Psoas muscle (tissue), 8 donors: ENCODE measurements at regions of chr3 and their contacts with region 1.

Region 1: DNA sequence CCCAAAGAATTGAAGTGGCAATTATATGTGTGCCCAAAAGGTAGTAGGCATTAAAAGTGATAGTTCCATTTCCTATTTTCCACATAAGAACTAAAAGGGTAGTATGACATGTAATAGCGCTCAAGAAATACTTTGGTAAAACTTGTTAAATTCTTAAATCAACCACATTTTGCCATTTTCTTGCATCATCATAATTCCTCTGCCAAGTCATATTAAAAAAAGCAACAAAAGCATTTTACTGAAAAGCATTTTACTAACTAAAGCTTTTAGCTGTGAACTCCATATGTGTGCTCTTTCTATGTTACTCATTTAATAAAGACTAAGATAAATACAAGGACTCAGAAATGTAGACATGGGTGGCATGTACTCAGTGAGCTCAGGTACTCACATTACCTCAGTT is 70.1 kb downstream of the GPR160 start:
- DNase-seq: no peak
- ATAC-seq: no peak
- H3K4me3 ChIP-seq: no peak overlapping the region
- H3K27ac ChIP-seq: no peak overlapping the region
- H3K4me1 ChIP-seq: no peaks in the 10 kb centered on the region
- H3K27me3 ChIP-seq: no peaks in the 10 kb centered on the region
- CTCF ChIP-seq: no peak

Region 2: GRCh38 chr3:169619793-169620192 is 488.1 kb before region 1 on chr3:
- intact Hi-C with region 1: no loop called
- DNase-seq: no peak
- ATAC-seq: peak in 2 of 4 donors; percentile 35 to 36
- H3K4me3 ChIP-seq: no peak overlapping the region
- H3K27ac ChIP-seq: peak overlapping the region; percentile 50
- H3K4me1 ChIP-seq: no peaks in the 10 kb centered on the region
- H3K27me3 ChIP-seq: no peaks in the 10 kb centered on the region
- CTCF ChIP-seq: peak; percentile 10

Region 3: GRCh38 chr3:169998568-169999131 is 109.3 kb before region 1 on chr3:
- intact Hi-C with region 1: no loop called
- DNase-seq: no peak
- ATAC-seq: peak; percentile 32 to 69 (median 66)
- H3K4me3 ChIP-seq: no peak overlapping the region
- H3K27ac ChIP-seq: no peak overlapping the region
- H3K4me1 ChIP-seq: peaks cover 2% of the 10 kb centered on the region
- H3K27me3 ChIP-seq: no peaks in the 10 kb centered on the region
- CTCF ChIP-seq: no peak

Region 4: DNA sequence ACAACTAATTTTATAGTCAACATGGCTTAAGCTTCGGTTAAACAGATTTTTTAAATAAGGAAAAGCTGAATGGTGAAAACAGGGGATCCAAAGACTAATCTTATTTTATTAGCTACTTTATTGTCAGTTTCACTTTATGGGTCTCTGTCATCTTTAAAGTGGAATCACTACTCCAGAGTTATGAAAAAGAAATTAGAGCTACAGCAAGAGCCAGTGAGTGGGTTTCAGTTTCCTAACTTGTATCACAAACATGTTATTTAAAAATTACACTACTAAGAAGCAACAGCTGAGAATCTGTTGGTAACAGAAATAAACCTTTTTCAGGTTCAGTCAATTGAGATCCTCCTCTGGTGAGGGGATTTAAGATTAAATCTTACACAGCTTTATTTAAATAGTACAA is 63.6 kb after region 1 on chr3:
- intact Hi-C with region 1: loop called in 1 of 2 experiments (anchors 10 kb)
- DNase-seq: no peak
- ATAC-seq: no peak
- H3K4me3 ChIP-seq: no peak overlapping the region
- H3K27ac ChIP-seq: no peak overlapping the region
- H3K4me1 ChIP-seq: no peaks in the 10 kb centered on the region
- H3K27me3 ChIP-seq: no peaks in the 10 kb centered on the region
- CTCF ChIP-seq: no peak

Region 5: GRCh38 chr3:170848292-170848917 is 740.5 kb after region 1 on chr3:
- intact Hi-C with region 1: no loop called
- DNase-seq: no peak
- ATAC-seq: no peak
- H3K4me3 ChIP-seq: no peak overlapping the region
- H3K27ac ChIP-seq: no peak overlapping the region
- H3K4me1 ChIP-seq: no peaks in the 10 kb centered on the region
- H3K27me3 ChIP-seq: no peaks in the 10 kb centered on the region
- CTCF ChIP-seq: peak; percentile 22